Psoas muscle (tissue), 8 donors: ENCODE measurements at regions of chr5 and their contacts with region 1.

Region 1: DNA sequence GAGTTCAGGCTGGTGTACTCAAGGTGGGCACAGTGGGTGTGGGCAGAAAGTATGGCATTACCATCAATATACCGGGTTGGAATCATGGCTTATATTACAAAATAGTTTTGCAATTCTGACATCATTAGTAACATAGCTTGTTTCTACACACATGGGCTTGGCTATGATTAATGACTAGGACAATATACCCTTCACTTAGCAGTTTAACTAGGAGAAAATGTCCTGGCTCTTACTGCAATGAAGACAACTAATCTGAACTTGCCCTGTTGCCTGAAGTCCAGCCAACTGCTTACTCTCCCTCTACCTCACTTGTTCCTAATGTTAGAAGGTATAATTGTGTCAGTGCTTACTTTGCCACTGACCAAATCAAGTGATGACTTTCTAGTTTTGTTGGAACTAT is 612.5 kb downstream of the EFNA5 start:
- DNase-seq: no peak
- ATAC-seq: peak; percentile 52 to 95 (median 94)
- H3K4me3 ChIP-seq: no peak overlapping the region
- H3K27ac ChIP-seq: peak overlapping the region; percentile 2
- H3K4me1 ChIP-seq: peaks cover 10% of the 10 kb centered on the region
- H3K27me3 ChIP-seq: no peaks in the 10 kb centered on the region
- CTCF ChIP-seq: no peak

Region 2: DNA sequence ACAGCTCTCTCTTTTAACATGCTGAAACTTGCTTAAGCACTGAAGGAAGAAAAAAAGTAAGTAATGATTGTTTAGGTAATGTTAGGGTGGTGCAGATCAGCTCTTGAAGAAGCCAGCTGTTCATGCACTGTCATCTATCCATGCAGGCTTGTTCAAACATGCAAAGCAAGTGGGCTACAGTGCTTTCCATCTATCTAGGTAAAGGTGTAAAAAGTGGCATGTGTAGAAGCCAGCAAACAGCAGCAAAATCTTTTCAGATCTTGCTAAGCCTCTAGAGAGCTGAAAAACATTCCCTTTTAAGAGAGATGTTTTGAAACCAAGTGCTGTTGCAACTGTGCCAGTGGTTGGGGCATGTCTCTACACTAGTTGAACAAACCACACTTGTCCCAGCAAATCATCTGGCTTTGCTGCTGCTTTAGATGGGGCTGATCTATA is 398.1 kb after region 1 on chr5:
- intact Hi-C with region 1: no loop called
- DNase-seq: no peak
- ATAC-seq: no peak
- H3K4me3 ChIP-seq: no peak overlapping the region
- H3K27ac ChIP-seq: no peak overlapping the region
- H3K4me1 ChIP-seq: no peaks in the 10 kb centered on the region
- H3K27me3 ChIP-seq: no peaks in the 10 kb centered on the region
- CTCF ChIP-seq: no peak

Region 3: GRCh38 chr5:108266235-108266634 is 1208.0 kb after region 1 on chr5:
- intact Hi-C with region 1: loop called in 1 of 2 experiments (anchors 5 kb)
- DNase-seq: no peak
- ATAC-seq: peak; percentile 90 to 97 (median 96)
- H3K4me3 ChIP-seq: no peak overlapping the region
- H3K27ac ChIP-seq: no peak overlapping the region
- H3K4me1 ChIP-seq: peaks cover 17% of the 10 kb centered on the region
- H3K27me3 ChIP-seq: no peaks in the 10 kb centered on the region
- CTCF ChIP-seq: no peak